Thyroid gland (tissue), 4 donors: ENCODE measurements at regions of chr19 and their contacts with region 1.

Region 1: DNA sequence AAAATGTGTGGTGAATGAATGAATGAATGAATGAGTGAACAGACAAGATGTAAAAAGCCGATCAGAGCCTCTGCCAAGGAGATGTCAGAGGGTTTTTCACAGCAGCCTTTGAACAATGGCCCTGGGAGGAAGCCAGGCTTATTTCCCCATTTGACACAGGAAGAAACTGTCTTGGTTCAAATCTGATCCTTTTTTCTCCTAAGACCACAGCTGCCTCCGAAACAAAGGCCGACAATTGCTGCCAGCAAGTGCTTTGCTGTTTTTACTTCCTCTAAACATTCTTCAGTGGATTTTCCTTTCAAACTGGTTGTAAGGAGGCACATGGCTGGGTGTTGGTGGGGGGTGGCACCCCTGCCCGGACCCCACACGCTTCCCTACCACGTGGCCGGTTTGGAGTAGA is 44.2 kb upstream of the HOMER3 start:
- DNase-seq: no peak
- H3K4me3 ChIP-seq: no peak overlapping the region
- H3K27ac ChIP-seq: peak overlapping the region in 1 of 3 donors; percentile 39
- H3K4me1 ChIP-seq: peaks cover 0 to 4% of the 10 kb centered on the region in 2 donors
- H3K27me3 ChIP-seq: no peaks in the 10 kb centered on the region
- CTCF ChIP-seq: no peak
- POLR2A ChIP-seq: no peak

Region 2: DNA sequence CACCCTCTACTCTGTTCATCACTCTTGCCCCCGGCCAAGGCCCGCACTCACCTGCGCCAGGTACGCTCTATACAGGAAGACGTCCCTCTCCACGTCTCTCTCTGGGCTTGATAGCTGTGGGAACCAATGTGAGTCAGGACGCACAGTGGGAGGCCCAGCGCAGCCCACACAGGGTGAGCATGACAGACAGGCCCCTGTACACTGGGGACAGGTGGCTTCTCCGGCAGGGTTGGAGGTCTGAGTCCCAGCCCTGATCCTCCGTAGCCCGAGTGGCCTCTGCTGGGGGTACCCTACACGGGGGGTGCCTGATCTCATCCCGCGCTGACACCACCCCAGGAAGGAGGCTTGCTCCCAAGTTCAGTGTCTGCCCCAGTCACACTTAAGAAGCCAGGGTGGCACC is 72.3 kb before region 1 on chr19:
- intact Hi-C with region 1: loop called (anchors 5 kb)
- DNase-seq: no peak
- H3K4me3 ChIP-seq: no peak overlapping the region
- H3K27ac ChIP-seq: no peak overlapping the region
- H3K4me1 ChIP-seq: peaks cover 5 to 8% of the 10 kb centered on the region in 2 donors
- H3K27me3 ChIP-seq: no peaks in the 10 kb centered on the region
- CTCF ChIP-seq: no peak
- POLR2A ChIP-seq: no peak

Region 3: DNA sequence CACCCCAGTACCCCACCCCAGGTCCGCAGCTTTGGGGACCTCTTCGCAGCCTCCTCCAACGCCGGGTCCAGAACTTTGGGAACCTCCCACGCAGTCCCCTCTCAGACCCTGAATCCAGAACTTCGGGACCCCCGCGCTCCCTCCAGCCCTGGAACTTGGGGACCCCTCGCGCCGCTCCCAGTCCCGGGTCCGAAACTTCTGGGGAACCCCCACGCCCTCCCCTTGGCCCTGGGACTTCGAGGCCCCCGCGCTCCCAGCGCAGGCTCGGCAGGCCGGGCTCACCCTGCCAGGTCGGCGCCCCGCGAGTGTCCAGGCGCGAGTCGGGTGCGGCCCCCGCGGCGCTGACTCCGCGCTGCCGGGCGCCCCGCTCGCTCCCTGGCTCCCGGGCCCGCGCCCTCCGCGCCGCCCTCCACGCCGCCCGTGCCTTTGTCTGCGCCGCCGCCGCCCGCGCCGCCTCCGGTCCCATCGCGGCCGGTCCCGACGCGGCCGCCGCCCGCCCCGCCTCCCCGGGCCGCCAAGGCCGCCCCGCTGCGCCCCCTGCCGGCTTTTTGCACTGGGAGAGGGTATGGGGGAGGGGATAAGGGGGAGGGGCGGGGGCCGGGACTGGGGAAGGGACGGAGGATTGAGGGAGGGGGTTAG is 44.4 kb before region 1 on chr19 and contains the start of gene HOMER3:
- intact Hi-C with region 1: loop called (anchors 5 kb)
- DNase-seq: peak; percentile 76 to 85
- H3K4me3 ChIP-seq: peak within 1 kb of the TSS; percentile 35 to 65 (median 63)
- H3K27ac ChIP-seq: peak within 1 kb of the TSS in 2 of 3 donors; percentile 63 to 75
- H3K4me1 ChIP-seq: peaks cover 9 to 15% of the 10 kb centered on the region in 2 donors
- H3K27me3 ChIP-seq: no peaks in the 10 kb centered on the region
- CTCF ChIP-seq: peak in 3 of 6 experiments; percentile 13 to 66 (median 35)
- POLR2A ChIP-seq: peak; percentile 24 to 73
- total RNA-seq, gene HOMER3: 55.6 to 169 (median 63.4) TPM